Endothelial cell of umbilical vein (primary cell): ENCODE measurements at regions of chr5 and their contacts with region 1.

Region 1: GRCh38 chr5:132490486-132491367 is at the start of gene IRF1:
- DNase-seq: peak; percentile 97
- H3K4me3 ChIP-seq: peak within 1 kb of the TSS; percentile 52 to 90 (median 66)
- H3K27ac ChIP-seq: peak within 1 kb of the TSS; percentile 89
- H3K4me1 ChIP-seq: peaks cover 25% of the 10 kb centered on the region
- H3K27me3 ChIP-seq: no peaks in the 10 kb centered on the region
- CTCF ChIP-seq: peak in 1 of 2 donors; percentile 26
- POLR2A ChIP-seq: peak; percentile 94
- total RNA-seq, gene IRF1: 17.7 and 28.0 TPM in 2 replicates

Region 2: GRCh38 chr5:132419502-132420468 is 70.9 kb before region 1 on chr5:
- CTCF ChIA-PET with region 1: interaction called, 34 read pairs
- POLR2A ChIA-PET with region 1: interaction called, 6 read pairs
- dilution Hi-C with region 1: no loop called
- intact Hi-C with region 1: loop called (anchors 1 kb)
- DNase-seq: peak; percentile 90
- H3K4me3 ChIP-seq: no peak overlapping the region
- H3K27ac ChIP-seq: peak overlapping the region; percentile 6
- H3K4me1 ChIP-seq: peaks cover 41% of the 10 kb centered on the region
- H3K27me3 ChIP-seq: no peaks in the 10 kb centered on the region
- CTCF ChIP-seq: peak; percentile 77 to 83
- POLR2A ChIP-seq: no peak

Region 3: GRCh38 chr5:132426525-132427138 is 64.1 kb before region 1 on chr5:
- CTCF ChIA-PET with region 1: interaction called, 32 read pairs
- POLR2A ChIA-PET with region 1: interaction called, 6 read pairs
- dilution Hi-C with region 1: no loop called
- intact Hi-C with region 1: loop called (anchors 1 kb)
- DNase-seq: peak; percentile 80
- H3K4me3 ChIP-seq: no peak overlapping the region
- H3K27ac ChIP-seq: peak overlapping the region; percentile 62
- H3K4me1 ChIP-seq: peaks cover 31% of the 10 kb centered on the region
- H3K27me3 ChIP-seq: no peaks in the 10 kb centered on the region
- CTCF ChIP-seq: peak; percentile 53 to 54
- POLR2A ChIP-seq: no peak

Region 4: GRCh38 chr5:132466433-132467286 is 24.1 kb before region 1 on chr5:
- CTCF ChIA-PET with region 1: interaction called, 12 read pairs
- POLR2A ChIA-PET with region 1: interaction called, 10 read pairs
- dilution Hi-C with region 1: no loop called
- intact Hi-C with region 1: loop called (anchors 1 kb)
- DNase-seq: peak; percentile 79
- H3K4me3 ChIP-seq: no peak overlapping the region
- H3K27ac ChIP-seq: no peak overlapping the region
- H3K4me1 ChIP-seq: peaks cover 43% of the 10 kb centered on the region
- H3K27me3 ChIP-seq: no peaks in the 10 kb centered on the region
- CTCF ChIP-seq: no peak
- POLR2A ChIP-seq: no peak

Region 5: DNA sequence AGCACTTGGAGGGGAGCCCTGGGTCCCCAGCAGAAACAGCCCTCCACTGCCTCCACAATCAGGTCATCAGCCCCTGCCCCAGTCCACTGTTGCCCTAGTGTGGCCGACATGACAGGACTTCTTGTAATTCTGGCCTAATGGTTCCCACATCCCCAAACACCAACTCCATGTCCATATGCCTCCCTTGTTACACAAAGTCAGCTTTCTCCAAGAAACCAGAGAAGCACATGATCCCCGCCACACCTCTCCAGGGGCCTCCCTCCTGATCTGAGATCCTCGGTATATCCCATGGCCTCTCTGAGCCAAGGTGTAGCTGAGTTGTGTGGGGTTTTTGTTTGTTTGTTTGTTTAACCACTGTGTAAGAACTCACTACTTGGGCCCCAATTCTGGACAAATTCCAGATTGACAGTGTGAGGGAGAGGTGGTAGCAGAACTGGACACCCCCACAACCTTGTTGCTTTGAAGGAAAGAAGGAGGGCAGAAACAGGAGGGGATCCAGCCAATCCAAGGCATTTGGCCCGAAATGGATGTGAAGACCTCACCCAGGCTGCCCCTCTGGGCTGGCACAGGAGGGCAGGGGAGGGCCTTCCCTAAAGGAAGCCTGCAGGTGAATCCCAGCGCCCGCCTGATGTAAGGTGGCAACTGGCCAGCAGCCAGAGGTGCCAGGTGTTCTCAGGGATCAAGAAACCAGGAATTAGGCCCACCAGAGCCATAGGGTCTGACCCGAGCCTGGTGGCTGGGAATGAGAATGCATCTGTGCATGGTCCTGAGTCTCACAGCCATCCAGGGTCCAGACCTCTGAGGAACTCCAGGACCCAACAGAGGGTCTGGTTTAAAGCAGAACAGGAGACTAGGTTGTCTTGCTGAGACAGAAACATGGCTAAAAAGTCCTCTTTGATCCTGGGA is 13.6 kb before region 1 on chr5:
- CTCF ChIA-PET with region 1: interaction called, 33 read pairs
- POLR2A ChIA-PET with region 1: interaction called, 20 read pairs
- dilution Hi-C with region 1: no loop called
- intact Hi-C with region 1: no loop called
- DNase-seq: no peak
- H3K4me3 ChIP-seq: no peak overlapping the region
- H3K27ac ChIP-seq: no peak overlapping the region
- H3K4me1 ChIP-seq: no peaks in the 10 kb centered on the region
- H3K27me3 ChIP-seq: no peaks in the 10 kb centered on the region
- CTCF ChIP-seq: no peak
- POLR2A ChIP-seq: no peak

Region 6: DNA sequence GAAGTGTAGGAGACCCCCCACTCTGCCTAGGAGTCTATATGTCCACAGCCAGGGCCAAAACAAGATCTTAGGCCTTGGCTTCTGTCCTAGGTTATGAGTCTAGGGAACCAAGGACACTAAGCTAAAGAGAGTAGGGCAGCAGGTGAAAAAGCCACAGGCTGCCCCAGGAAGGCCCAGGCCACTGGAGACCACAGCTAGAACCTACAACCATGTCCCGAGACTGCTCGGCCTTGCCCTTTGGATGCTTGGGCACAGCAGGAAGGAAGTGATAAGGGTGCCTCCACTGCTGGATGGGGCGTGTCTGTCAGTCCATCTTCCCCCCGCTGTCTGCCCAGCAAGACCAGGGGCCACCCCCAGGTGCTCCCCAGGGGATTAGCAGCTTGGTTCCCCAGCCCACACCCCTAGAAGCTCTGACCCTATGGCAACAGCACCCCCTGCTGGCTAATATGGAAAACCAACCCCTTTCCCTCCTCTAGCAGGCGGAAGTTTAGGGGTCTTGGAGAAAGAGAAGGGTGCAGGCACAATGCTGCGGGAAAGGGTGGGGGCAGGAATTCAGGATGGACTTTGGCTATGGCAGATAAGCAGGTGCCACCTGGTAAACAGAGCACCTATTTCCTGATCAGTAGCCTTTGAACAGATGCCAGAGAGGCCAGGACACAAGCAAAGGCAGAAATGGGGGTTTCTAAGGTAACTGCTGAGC is 10.4 kb after region 1 on chr5:
- CTCF ChIA-PET with region 1: interaction called, 41 read pairs
- POLR2A ChIA-PET with region 1: interaction called, 8 read pairs
- dilution Hi-C with region 1: no loop called
- intact Hi-C with region 1: no loop called
- DNase-seq: peak; percentile 71
- H3K4me3 ChIP-seq: no peak overlapping the region
- H3K27ac ChIP-seq: peak overlapping the region; percentile 27
- H3K4me1 ChIP-seq: peaks cover 42% of the 10 kb centered on the region
- H3K27me3 ChIP-seq: no peaks in the 10 kb centered on the region
- CTCF ChIP-seq: peak; percentile 78 to 79
- POLR2A ChIP-seq: no peak

Region 7: GRCh38 chr5:134489227-134489944 is 1998.7 kb after region 1 on chr5:
- CTCF ChIA-PET with region 1: no interaction called
- POLR2A ChIA-PET with region 1: interaction called, 11 read pairs
- dilution Hi-C with region 1: no loop called
- intact Hi-C with region 1: no loop called
- DNase-seq: no peak
- H3K4me3 ChIP-seq: no peak overlapping the region
- H3K27ac ChIP-seq: no peak overlapping the region
- H3K4me1 ChIP-seq: no peaks in the 10 kb centered on the region
- H3K27me3 ChIP-seq: no peaks in the 10 kb centered on the region
- CTCF ChIP-seq: no peak
- POLR2A ChIP-seq: no peak